ENCODE measurements at regions of chr10 and their contacts with region 1.

Region 1: DNA sequence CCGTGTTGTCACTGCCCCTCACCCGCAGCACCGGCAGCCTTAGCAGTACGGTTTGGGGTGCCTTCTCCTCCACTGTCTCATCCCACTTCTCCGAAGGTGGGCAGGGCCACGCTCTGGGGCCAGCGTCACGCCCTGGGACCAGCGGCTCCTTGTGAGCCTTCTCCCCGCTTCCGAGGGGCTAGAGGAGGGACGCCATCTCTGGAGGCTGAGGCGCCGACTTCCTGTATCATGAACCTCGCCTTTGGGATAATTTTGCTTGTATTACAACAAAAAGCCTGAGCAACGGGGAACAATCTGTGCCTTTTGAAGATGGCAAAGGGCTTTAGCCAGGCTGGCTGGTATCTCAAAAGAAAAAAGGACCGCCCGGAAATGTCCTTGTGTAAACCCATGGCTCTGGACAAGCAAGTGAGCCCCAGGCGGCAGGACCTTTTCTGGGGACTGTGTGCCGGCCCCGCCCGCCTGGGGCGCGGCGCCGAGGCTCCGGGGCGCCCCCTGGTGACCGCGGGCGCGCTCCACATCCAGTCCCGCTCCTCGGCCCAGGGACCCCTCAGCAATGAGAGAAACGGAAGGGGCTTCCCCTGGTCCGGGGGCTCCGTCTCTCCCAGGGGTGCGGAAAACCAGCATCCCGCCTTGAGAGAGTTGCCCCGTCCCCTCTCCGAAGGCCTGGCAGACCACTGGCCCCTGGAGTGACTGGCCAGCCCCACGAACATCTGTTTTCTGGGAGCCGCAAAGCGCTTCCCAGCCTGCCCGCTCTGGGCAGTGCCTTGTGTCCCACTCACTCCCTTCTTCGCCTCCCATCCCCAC is 3.8 kb downstream of the DEPP1 start:
- DNase-seq: peak; percentile 26 to 83 (median 68)
- ATAC-seq: peak; percentile 93
- H3K4me3 ChIP-seq: peak overlapping the region; percentile 52
- H3K4me3 Mint-ChIP-seq: peak overlapping the region; percentile 63 to 81 (median 72)
- H3K27ac ChIP-seq: no peak overlapping the region
- H3K27ac Mint-ChIP-seq: peak overlapping the region in 5 of 9 donors; percentile 4 to 83 (median 31)
- H3K4me1 ChIP-seq: peaks cover 10 to 11% of the 10 kb centered on the region in 2 donors
- H3K4me1 Mint-ChIP-seq: peaks cover 0 to 39% (median 22%) of the 10 kb centered on the region in 7 donors
- H3K27me3 ChIP-seq: no peaks in the 10 kb centered on the region
- H3K27me3 Mint-ChIP-seq: no peaks in the 10 kb centered on the region

Region 2: DNA sequence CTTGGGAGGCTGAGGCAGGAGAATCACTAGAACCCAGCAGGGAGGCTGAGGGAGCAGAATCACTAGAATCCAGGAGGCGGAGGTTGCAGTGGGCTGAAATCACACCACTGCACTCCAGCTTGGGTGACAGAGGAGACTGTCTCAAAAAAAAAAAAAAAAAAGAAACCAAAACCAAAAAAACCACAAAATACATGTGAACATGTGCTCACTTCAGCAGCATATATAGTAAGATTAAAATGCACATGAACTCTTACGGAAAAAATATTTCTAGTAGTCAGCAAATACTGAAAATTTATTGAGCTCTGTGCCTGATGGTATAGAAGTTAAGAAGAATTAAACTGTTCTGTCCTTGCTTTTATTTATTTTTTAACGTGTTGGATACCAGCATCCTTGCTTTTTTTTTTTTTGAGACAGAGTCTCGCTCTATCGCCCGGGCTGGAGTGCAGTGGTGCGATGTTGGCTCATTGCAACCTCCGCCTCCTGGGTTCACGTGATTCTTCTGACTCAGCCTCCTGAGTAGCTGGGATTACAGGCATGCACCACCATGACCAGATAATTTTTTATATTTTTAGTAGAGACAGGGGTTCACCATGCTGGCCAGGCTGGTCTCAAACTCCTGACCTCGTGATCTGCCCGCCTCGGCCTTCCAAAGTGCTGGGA is 1547.5 kb before region 1 on chr10:
- CTCF ChIA-PET with region 1: no interaction called
- POLR2A ChIA-PET with region 1: no interaction called
- intact Hi-C with region 1: no loop called
- DNase-seq: peak in 7 of 9 donors; percentile 46 to 67 (median 56)
- ATAC-seq: peak; percentile 85
- H3K4me3 ChIP-seq: no peak overlapping the region
- H3K4me3 Mint-ChIP-seq: peak overlapping the region; percentile 26 to 82 (median 72)
- H3K27ac ChIP-seq: peak overlapping the region; percentile 44
- H3K27ac Mint-ChIP-seq: peak overlapping the region; percentile 76 to 94 (median 86)
- H3K4me1 ChIP-seq: peaks cover 0 to 12% of the 10 kb centered on the region in 2 donors
- H3K4me1 Mint-ChIP-seq: peaks cover 6 to 30% (median 25%) of the 10 kb centered on the region in 7 donors
- H3K27me3 ChIP-seq: no peaks in the 10 kb centered on the region
- H3K27me3 Mint-ChIP-seq: no peaks in the 10 kb centered on the region

Region 3: GRCh38 chr10:44492662-44493061 is 482.2 kb before region 1 on chr10:
- CTCF ChIA-PET with region 1: no interaction called
- POLR2A ChIA-PET with region 1: no interaction called
- intact Hi-C with region 1: no loop called
- DNase-seq: no peak
- ATAC-seq: no peak
- H3K4me3 ChIP-seq: no peak overlapping the region
- H3K4me3 Mint-ChIP-seq: no peak overlapping the region
- H3K27ac ChIP-seq: no peak overlapping the region
- H3K27ac Mint-ChIP-seq: no peak overlapping the region
- H3K4me1 ChIP-seq: no peaks in the 10 kb centered on the region
- H3K4me1 Mint-ChIP-seq: no peaks in the 10 kb centered on the region
- H3K27me3 ChIP-seq: no peaks in the 10 kb centered on the region
- H3K27me3 Mint-ChIP-seq: peaks cover 0 to 24% (median 6%) of the 10 kb centered on the region in 5 donors

Region 4: DNA sequence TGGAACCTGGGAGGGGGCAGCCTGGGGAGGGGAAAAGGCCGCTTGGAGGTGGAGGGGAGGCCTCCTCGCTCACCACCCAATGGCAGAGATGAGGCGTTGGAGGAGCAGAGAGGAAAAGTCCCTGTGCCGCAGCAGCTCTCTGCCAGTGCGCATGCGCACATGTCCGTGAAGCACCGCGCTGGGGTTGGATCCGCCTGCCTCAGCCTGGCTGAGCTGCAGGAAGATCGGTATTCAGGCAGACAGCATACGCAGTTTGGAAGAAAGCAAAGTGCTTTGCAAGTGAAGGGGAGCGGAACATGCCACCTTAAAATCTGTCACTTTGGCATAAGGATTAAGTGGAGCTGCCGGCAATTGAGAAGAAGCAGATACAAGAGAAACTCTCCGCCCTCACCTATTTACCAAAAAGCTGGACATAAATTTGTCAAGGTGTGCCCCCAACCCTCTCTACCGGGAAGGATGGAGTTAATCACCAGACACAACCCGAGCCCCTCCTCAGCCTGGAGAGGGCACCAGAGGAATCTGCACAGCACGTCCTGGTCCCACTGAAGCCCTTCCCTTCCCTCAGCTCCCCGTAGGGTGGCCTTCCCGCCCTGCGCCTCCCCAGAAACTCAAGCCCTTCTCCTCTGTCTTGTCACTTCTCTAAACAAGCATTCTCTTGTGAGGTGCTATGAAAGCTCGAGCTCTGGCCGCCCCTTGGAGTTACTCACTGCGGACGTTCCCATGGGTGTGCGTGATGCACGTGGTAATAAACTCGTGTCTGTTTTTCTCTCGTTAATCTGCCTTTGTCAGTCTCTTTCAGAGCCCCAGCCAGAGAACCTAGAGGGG is 95.9 kb before region 1 on chr10:
- CTCF ChIA-PET with region 1: no interaction called
- POLR2A ChIA-PET with region 1: no interaction called
- intact Hi-C with region 1: loop called in 1 of 2 experiments (anchors 1 kb)
- DNase-seq: peak; percentile 63 to 85 (median 81)
- ATAC-seq: peak; percentile 83
- H3K4me3 ChIP-seq: peak overlapping the region; percentile 60
- H3K4me3 Mint-ChIP-seq: peak overlapping the region; percentile 81 to 99 (median 93)
- H3K27ac ChIP-seq: peak overlapping the region; percentile 39
- H3K27ac Mint-ChIP-seq: peak overlapping the region; percentile 56 to 93 (median 88)
- H3K4me1 ChIP-seq: peaks cover 0 to 10% of the 10 kb centered on the region in 2 donors
- H3K4me1 Mint-ChIP-seq: peaks cover 5 to 19% (median 16%) of the 10 kb centered on the region in 7 donors
- H3K27me3 ChIP-seq: no peaks in the 10 kb centered on the region
- H3K27me3 Mint-ChIP-seq: peaks cover 0 to 16% (median 0%) of the 10 kb centered on the region in 5 donors

Region 5: GRCh38 chr10:44932517-44933450 is 42.0 kb before region 1 on chr10:
- CTCF ChIA-PET with region 1: interaction called, 24 read pairs
- POLR2A ChIA-PET with region 1: interaction called, 4 read pairs
- intact Hi-C with region 1: loop called (anchors 1 kb)
- DNase-seq: peak; percentile 55 to 89 (median 72)
- ATAC-seq: peak; percentile 94
- H3K4me3 ChIP-seq: no peak overlapping the region
- H3K4me3 Mint-ChIP-seq: no peak overlapping the region
- H3K27ac ChIP-seq: no peak overlapping the region
- H3K27ac Mint-ChIP-seq: no peak overlapping the region
- H3K4me1 ChIP-seq: peaks cover 0 to 4% of the 10 kb centered on the region in 2 donors
- H3K4me1 Mint-ChIP-seq: peaks cover 7 to 16% (median 11%) of the 10 kb centered on the region in 7 donors
- H3K27me3 ChIP-seq: no peaks in the 10 kb centered on the region
- H3K27me3 Mint-ChIP-seq: peaks cover 0 to 6% (median 4%) of the 10 kb centered on the region in 5 donors

Region 6: GRCh38 chr10:45000752-45001380 is 26.0 kb after region 1 on chr10 and contains the start of gene ZNF22:
- CTCF ChIA-PET with region 1: no interaction called
- POLR2A ChIA-PET with region 1: no interaction called
- intact Hi-C with region 1: loop called in 1 of 2 experiments (anchors 2 kb)
- DNase-seq: peak; percentile 52 to 77 (median 71)
- ATAC-seq: peak; percentile 88
- H3K4me3 ChIP-seq: peak within 1 kb of the TSS; percentile 81
- H3K4me3 Mint-ChIP-seq: peak within 1 kb of the TSS; percentile 77 to 96 (median 93)
- H3K27ac ChIP-seq: peak within 1 kb of the TSS; percentile 68
- H3K27ac Mint-ChIP-seq: peak within 1 kb of the TSS; percentile 78 to 94 (median 91)
- H3K4me1 ChIP-seq: peaks cover 15 to 16% of the 10 kb centered on the region in 2 donors
- H3K4me1 Mint-ChIP-seq: peaks cover 16 to 52% (median 39%) of the 10 kb centered on the region in 7 donors
- H3K27me3 ChIP-seq: no peaks in the 10 kb centered on the region
- H3K27me3 Mint-ChIP-seq: peaks cover 0 to 8% (median 0%) of the 10 kb centered on the region in 5 donors
- total RNA-seq, gene ZNF22: 13.1 to 33.6 (median 27.4) TPM

Measured in naive thymus-derived CD4-positive, alpha-beta T cell (primary cell).